Activated naive CD4-positive, alpha-beta T cell treated with anti-CD3 and anti-CD28 coated beads for 36 hours (primary cell): ENCODE measurements at regions of chr3 and their contacts with region 1.

Region 1: DNA sequence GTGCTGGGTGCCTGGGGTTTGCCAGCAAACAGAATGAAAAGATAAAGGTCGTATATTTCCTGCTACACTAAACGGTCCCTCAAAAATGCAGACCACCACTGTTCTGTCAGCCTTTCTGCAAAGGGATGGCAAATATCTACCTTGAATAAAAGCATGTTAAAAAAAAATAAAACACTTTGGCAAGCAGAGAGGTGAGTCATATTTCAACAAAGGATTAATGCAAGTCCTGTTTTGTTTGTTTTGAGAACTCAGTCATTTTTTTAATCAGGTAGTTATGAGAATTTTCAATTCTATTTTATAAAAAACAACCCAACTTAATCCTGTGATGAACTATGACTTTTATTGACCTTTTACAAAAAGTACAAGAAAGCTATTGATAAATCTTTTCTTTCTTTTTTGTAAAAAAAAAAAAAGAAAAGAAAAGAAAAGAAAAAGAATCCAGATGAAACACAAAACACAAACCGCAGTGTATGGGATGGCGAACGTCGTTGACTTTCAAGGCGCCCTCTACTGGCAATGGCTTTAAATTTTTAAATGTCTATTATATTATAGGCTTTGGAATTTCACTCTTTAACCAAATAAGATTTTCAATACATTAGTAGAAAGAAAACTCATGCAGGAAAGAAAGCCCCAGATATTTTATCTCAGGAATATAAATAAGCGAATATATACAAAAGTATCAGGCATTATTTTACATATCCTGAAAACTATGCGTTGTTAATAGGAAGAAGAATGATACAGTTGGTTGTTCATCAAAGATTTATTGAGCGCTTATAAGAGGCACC is 87.8 kb downstream of the NCEH1 start:
- DNase-seq: peak; percentile 64
- H3K4me3 Mint-ChIP-seq: no peak overlapping the region
- H3K27ac Mint-ChIP-seq: no peak overlapping the region
- H3K4me1 Mint-ChIP-seq: peaks cover 11% of the 10 kb centered on the region
- H3K27me3 Mint-ChIP-seq: no peaks in the 10 kb centered on the region

Region 2: GRCh38 chr3:172201136-172201869 is 421.8 kb before region 1 on chr3:
- CTCF ChIA-PET with region 1: no interaction called
- intact Hi-C with region 1: no loop called
- DNase-seq: no peak
- H3K4me3 Mint-ChIP-seq: no peak overlapping the region
- H3K27ac Mint-ChIP-seq: no peak overlapping the region
- H3K4me1 Mint-ChIP-seq: peaks cover 2% of the 10 kb centered on the region
- H3K27me3 Mint-ChIP-seq: no peaks in the 10 kb centered on the region

Region 3: GRCh38 chr3:172461530-172462138 is 161.5 kb before region 1 on chr3:
- CTCF ChIA-PET with region 1: interaction called, 15 read pairs
- intact Hi-C with region 1: loop called (anchors 1 kb)
- DNase-seq: no peak
- H3K4me3 Mint-ChIP-seq: no peak overlapping the region
- H3K27ac Mint-ChIP-seq: no peak overlapping the region
- H3K4me1 Mint-ChIP-seq: peaks cover 4% of the 10 kb centered on the region
- H3K27me3 Mint-ChIP-seq: no peaks in the 10 kb centered on the region

Region 4: DNA sequence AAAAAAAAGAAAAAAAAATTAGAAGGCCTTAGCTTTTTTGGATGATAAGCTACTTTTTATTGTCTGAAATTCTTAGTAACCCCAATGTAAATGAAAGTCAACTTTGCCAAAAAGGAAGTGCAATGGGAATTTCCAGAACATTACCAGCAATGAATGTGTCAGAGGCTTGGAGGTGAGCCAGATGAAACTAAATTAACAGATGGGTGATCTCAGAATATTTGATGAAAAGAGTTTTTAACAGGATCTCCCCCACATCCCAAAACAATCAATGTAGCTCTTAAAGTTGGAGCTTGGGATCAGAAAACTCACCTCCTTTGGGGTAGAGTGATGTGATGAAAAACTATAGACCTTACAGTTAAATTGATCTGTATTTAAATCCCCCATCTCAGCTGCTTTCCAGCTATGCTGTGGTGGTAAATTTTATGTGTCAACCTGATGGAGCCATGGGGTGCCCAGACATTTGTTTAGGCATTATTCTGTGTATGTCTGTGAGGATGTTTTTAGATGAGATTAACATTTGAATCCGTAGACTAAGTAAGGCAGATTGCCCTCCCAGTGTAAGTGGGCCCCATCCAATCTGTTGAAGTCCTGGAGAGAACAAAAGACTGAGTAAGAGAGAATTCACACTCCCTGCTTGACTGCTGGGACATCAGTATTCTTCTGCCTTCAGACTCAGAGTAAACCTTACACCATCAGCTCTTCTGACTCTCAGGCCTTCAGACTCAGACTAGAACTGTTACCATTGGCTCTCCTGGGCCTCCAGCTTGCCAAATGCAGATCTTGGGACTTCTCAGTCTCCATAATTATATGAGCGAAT is 15.6 kb before region 1 on chr3:
- CTCF ChIA-PET with region 1: interaction called, 13 read pairs
- intact Hi-C with region 1: loop called (anchors 1 kb)
- DNase-seq: peak; percentile 51
- H3K4me3 Mint-ChIP-seq: no peak overlapping the region
- H3K27ac Mint-ChIP-seq: peak overlapping the region; percentile 61
- H3K4me1 Mint-ChIP-seq: peaks cover 11% of the 10 kb centered on the region
- H3K27me3 Mint-ChIP-seq: no peaks in the 10 kb centered on the region

Region 5: DNA sequence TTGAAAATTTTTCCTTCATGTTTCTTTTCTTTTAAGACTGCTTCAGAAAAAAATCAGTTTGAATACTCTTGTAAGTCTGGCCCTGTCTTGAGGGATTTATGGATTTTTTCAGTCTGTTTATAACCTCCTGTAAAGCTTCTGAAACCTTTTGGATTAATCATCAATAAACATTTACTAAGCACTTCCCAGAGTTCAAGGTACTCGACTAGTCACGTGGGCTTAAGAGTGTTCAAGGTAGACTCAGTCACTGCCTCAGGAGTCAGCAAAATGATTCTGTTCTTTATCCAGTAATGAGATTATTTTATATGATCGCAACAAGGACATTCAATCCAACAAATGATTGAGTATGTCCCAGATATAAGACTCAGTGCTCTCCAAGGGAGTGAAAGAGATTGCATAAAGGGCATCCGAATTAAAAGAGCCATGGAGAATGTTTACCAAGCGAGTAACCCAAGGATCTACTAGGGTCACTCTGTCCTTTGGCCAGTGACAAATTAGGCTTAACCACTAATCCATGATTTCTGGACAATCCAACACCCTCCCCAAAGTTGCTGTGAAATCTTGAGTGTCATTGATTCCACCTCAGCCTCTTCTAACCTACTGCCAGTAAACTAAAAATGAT is 1509.4 kb after region 1 on chr3:
- CTCF ChIA-PET with region 1: no interaction called
- intact Hi-C with region 1: no loop called
- DNase-seq: no peak
- H3K4me3 Mint-ChIP-seq: no peak overlapping the region
- H3K27ac Mint-ChIP-seq: no peak overlapping the region
- H3K4me1 Mint-ChIP-seq: no peaks in the 10 kb centered on the region
- H3K27me3 Mint-ChIP-seq: no peaks in the 10 kb centered on the region